ENCODE measurements at regions of chr10 and their contacts with region 1.

Region 1: DNA sequence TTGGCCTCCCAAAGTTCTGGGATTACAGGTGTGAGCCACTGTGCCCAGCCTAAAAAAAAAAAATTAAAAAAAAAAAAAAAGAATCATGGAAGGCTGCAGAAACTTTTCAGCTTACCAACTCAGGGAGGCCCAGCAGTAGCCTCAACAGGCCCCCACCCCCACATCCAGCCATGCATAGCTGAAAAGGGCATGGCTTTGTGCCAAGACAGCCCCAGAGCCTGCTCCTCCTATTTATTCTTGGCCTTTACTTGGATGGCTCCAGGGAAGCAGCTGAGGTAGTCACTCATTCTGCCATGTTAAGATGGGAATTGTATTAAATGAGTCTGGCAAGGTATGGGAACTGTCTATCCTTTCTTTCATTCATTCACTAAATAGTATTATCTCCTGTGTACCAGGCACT is 13.7 kb upstream of the CNNM2 start:
- DNase-seq: no peak
- H3K4me3 ChIP-seq: no peak overlapping the region
- H3K27ac ChIP-seq: no peak overlapping the region
- H3K4me1 ChIP-seq: no peaks in the 10 kb centered on the region
- H3K27me3 ChIP-seq: no peaks in the 10 kb centered on the region
- CTCF ChIP-seq: no peak

Region 2: DNA sequence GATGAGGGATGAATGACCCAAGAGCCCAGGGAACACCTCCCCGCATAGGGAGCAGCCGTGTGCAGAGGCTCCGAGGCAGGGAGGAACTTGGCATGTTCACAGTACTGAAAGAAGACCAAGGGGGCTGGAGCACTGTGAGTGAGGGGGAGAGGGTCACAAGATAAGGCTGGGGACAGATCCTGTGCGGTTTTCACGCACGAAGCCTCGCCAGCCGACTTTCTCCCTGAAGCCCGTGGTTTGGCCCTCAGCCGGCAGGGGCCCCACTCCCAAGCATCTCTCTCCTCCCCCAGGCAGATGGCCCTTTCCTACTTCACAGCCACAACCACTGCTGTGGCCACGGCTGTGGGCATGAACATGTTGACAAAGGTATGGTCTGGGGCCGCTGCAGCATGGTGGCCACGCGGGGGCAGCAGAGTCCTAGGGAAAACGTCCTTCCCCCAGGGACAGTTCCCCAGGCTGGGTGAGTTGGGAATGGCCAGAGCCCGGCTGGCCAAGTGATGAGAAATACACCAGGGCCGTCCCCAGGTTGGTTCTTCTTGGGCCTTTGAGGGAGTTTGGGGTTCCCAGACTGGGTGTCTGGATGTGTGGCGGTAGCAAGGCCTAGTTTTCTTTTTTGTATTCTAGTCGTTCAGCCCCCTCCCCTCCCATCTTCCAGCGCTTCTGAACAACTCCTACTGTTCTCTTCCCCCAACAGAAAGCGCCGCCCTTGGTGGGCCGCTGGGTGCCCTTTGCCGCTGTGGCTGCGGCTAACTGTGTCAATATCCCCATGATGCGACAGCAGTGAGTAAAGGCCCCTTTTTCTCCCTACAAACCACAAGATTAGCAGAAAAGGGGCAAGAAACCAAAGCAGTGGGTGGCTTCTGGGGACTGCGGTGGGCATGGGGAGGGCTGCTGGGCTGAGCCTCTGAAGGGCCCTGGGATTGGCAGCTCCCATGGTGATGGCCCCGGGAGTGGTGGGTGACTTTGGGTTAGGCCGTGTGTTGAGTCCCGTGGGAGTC is 175.0 kb before region 1 on chr10:
- CTCF ChIA-PET with region 1: interaction called, 14 read pairs
- dilution Hi-C with region 1: no loop called
- in situ Hi-C with region 1: loop called in 1 of 2 experiments (anchors 5 kb)
- intact Hi-C with region 1: loop called (anchors 1 kb)
- DNase-seq: peak; percentile 57
- H3K4me3 ChIP-seq: no peak overlapping the region
- H3K27ac ChIP-seq: no peak overlapping the region
- H3K4me1 ChIP-seq: no peaks in the 10 kb centered on the region
- H3K27me3 ChIP-seq: no peaks in the 10 kb centered on the region
- CTCF ChIP-seq: peak; percentile 90

Region 3: GRCh38 chr10:102735065-102735562 is 169.2 kb before region 1 on chr10:
- CTCF ChIA-PET with region 1: interaction called, 14 read pairs
- dilution Hi-C with region 1: no loop called
- in situ Hi-C with region 1: loop called in 1 of 2 experiments (anchors 10 kb)
- intact Hi-C with region 1: no loop called
- DNase-seq: no peak
- H3K4me3 ChIP-seq: no peak overlapping the region
- H3K27ac ChIP-seq: no peak overlapping the region
- H3K4me1 ChIP-seq: no peaks in the 10 kb centered on the region
- H3K27me3 ChIP-seq: no peaks in the 10 kb centered on the region
- CTCF ChIP-seq: no peak

Region 4: DNA sequence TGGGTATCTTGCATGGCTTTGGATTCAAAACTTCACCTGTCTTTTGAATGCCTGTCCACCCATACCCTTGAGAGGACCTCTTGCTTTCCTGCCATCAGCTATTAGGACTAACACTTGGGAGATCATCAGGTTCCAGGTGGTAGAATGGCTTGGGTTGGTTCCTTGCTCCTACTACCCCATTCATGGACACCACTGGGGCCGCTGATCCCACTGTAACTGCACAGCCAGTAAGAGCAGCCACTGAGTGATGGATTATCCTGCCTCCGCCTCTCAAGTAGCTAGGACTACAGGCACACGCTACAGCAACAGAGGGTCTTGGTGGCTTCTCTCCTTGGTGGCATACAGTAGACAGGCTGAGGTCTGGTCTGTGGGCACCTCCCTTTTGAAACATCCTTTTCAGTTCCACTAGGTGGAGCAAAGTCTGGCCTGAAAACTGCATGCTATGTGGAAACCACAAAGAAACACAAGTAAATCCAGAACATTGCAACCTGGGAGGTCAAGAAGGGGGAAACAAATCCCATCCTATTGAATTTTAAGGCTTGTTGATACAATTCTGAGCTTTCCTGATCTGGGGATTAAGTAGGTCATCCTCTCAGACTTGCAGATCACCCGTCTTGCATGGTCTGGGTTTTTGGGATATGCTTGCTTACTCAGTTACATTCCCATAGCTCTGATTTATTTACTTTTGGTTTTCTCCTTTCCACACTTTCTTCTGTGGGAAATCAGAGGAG is 151.2 kb before region 1 on chr10:
- CTCF ChIA-PET with region 1: interaction called, 3 read pairs
- dilution Hi-C with region 1: no loop called
- in situ Hi-C with region 1: loop called in 1 of 2 experiments (anchors 10 kb)
- intact Hi-C with region 1: loop called (anchors 1 kb)
- DNase-seq: peak; percentile 37
- H3K4me3 ChIP-seq: no peak overlapping the region
- H3K27ac ChIP-seq: no peak overlapping the region
- H3K4me1 ChIP-seq: no peaks in the 10 kb centered on the region
- H3K27me3 ChIP-seq: no peaks in the 10 kb centered on the region
- CTCF ChIP-seq: peak; percentile 52 to 77